ENCODE measurements at regions of chr3 and their contacts with region 1.

Region 1: DNA sequence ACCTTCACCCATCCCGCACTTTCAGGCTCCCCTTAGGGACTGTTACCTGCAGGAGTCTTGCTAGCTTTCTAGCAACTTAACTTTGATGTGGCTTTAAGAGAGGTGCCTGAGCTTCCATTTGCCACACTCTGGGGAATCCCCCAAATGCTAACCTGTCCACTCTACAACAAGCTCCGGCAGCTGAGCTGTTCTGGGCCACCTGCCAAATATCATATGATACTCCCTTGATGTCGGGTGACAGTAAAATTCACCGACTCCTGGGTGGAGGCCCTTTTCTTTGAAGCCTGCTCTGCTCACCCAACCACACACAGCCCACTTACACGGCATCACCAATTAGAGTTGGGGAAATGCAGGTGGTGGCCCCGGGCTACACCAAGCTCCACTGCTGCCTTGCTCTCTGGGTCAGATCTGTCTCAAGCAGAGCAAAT is 38.0 kb upstream of the XCR1 start:
- DNase-seq: no peak

Region 2: DNA sequence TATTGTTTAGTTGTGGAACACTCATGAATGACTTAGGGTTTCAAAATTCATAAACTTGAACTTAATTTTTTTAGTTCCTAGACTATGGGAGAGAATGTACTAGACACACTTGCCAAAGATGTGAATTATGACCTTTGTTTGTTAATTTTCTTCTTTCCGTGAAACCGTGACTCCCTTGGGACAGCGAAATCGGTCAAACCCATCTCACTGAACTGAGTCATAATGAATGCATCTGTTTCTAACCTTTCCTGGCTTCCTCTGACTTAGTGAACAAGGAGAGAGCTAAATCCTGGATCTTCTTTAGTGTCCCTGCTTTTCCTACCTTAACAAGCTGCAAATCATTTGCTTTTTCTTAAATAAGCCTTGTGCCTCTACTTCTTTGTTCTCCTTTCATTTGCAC is 591.5 kb before region 1 on chr3:
- in situ Hi-C with region 1: no loop called
- DNase-seq: no peak

Region 3: GRCh38 chr3:45942051-45942825 is 123.1 kb before region 1 on chr3:
- in situ Hi-C with region 1: loop called (anchors 10 kb)
- DNase-seq: no peak

Region 4: GRCh38 chr3:46193436-46193835 is 128.1 kb after region 1 on chr3:
- in situ Hi-C with region 1: no loop called
- DNase-seq: no peak